ENCODE measurements at regions of chr20 and their contacts with region 1.

Region 1: DNA sequence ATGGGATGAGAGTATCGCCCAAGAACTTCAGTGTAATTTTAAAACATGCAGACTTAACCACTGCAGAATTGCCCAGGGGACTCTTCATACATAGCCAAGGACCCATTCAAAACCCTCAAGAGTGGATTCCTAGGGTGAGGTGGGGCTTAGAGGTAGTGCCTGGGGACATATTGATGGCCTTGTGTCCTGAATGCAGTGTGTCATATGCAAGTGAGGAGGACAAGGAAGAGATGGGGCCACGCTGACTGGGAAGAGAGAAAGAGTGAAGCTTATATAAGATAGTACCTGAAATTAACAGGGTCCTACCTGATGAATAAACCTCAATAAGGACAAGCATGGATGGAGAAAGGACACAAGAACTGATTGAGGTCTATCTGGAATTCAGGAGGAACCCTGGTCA is 13.9 kb downstream of the MYL9 start:
- DNase-seq: no peak
- ATAC-seq: no peak
- H3K4me3 ChIP-seq: no peak overlapping the region
- H3K27ac ChIP-seq: no peak overlapping the region
- H3K4me1 ChIP-seq: peaks cover 0 to 7% of the 10 kb centered on the region in 2 experiments; a peak in 2 of 5 replicates
- H3K27me3 ChIP-seq: no peaks in the 10 kb centered on the region
- CTCF ChIP-seq: no peak
- EP300 ChIP-seq: no peak
- POLR2A ChIP-seq: no peak
- RAD21 ChIP-seq: no peak

Region 2: DNA sequence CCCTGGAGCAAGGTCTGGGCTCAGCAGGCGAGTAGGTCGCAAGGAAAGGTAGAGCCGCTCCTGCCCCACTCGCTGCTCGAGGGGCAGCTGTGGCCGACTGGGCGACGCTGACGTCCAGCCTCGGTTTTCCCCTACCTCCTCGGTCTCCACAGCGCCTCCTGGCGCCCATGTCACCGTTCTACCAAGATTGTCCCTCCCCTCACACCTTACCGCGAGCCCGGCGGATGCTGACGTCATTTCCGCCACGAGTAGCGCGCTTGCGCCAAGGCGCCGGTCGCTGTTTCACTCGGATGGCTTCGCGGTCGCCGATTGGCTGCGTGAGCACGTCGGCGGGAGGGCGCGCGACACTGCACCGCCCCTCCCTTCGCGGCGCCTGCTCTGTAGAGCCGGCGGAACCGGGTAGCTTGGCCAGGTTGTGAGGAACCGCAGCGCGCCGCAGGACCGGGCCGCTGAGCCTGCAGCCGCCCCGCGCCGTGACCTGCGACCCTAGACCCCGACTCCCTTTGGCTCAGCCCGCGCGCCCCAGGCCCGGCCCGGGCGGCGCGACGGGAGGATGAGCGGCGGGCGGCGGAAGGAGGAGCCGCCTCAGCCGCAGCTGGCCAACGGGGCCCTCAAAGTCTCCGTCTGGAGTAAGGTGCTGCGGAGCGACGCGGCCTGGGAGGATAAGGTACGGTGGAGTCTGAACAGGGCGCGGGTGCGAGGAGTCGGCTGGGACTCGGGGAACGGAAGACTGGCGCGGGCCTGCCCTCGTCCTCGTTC is 50.3 kb after region 1 on chr20 and contains the start of gene RAB5IF:
- CTCF ChIA-PET with region 1: interaction called, 4 read pairs
- POLR2A ChIA-PET with region 1: interaction called, 4 read pairs
- in situ Hi-C with region 1: loop called (anchors 5 kb)
- intact Hi-C with region 1: no loop called
- DNase-seq: peak; percentile 93 to 99 (median 94)
- ATAC-seq: peak; percentile 98
- H3K4me3 ChIP-seq: peak within 1 kb of the TSS; percentile 98
- H3K27ac ChIP-seq: peak within 1 kb of the TSS; percentile 89
- H3K4me1 ChIP-seq: peaks cover 8 to 12% of the 10 kb centered on the region in 2 experiments
- H3K27me3 ChIP-seq: no peaks in the 10 kb centered on the region
- CTCF ChIP-seq: peak; percentile 89 to 98 (median 98)
- EP300 ChIP-seq: peak; percentile 31; the same call in 1 of the 2 replicates
- POLR2A ChIP-seq: peak; percentile 91
- RAD21 ChIP-seq: peak; percentile 56 to 78
- polyA plus RNA-seq, gene RAB5IF: 26.5 to 41.9 TPM

Region 3: GRCh38 chr20:36632487-36633284 is 77.4 kb after region 1 on chr20:
- CTCF ChIA-PET with region 1: no interaction called
- POLR2A ChIA-PET with region 1: no interaction called
- in situ Hi-C with region 1: no loop called
- intact Hi-C with region 1: no loop called
- DNase-seq: peak; percentile 29 to 46 (median 34)
- ATAC-seq: peak; percentile 87
- H3K4me3 ChIP-seq: no peak overlapping the region
- H3K27ac ChIP-seq: no peak overlapping the region
- H3K4me1 ChIP-seq: peaks cover 0 to 3% of the 10 kb centered on the region in 2 experiments; a peak in 1 of 5 replicates
- H3K27me3 ChIP-seq: no peaks in the 10 kb centered on the region; a peak in 1 of 5 replicates
- CTCF ChIP-seq: peak; percentile 43 to 62 (median 45); a peak in 4 of 6 replicates
- EP300 ChIP-seq: no peak
- POLR2A ChIP-seq: no peak
- RAD21 ChIP-seq: peak in 1 of 2 experiments; percentile 53; a peak in 2 of 4 replicates

Measured in K562 (cell line).